Prostate gland (tissue), 2 donors: ENCODE measurements at regions of chr2 and their contacts with region 1.

Region 1: DNA sequence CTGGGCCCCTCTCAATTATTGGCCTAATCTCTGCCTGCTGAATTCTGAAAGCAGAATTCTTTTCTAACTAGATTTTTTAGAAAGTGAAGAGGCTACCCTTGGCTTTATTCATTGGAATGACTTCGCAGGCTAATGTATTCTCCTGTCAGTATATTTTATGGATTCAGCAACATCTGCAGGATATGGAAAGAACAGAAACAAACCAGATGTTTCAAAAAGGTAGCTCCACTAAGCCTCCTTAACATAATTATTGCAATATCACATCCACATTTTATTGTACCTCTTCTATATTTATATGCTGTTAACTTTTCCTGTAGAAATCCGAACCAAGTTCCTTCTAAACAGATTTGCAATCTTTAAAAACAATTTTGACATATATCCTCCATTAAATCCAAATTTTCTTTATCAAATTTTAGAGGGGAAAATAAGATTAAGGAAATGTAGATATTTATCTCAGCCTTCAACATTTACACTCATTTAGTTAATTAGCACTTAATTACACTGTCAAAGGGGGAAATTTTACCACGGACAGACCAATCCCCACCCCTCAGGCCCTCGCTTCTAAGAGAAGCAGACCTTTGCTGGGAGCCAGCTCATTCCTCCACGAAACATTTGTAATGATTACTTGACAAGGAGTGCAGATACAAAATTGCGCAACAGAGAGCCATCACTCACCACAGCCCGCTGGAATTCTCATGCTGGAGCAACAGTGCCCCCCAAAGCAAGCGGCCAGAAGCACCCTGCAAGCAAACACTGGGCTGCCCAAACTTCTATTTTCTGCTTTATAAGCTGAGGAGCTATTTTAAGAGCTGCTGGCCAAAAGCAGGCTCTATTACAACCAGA is 253.4 kb downstream of the ETAA1 start:
- DNase-seq: peak; percentile 54
- H3K4me3 ChIP-seq: no peak overlapping the region
- H3K27ac ChIP-seq: no peak overlapping the region
- H3K4me1 ChIP-seq: no peaks in the 10 kb centered on the region
- H3K27me3 ChIP-seq: no peaks in the 10 kb centered on the region
- CTCF ChIP-seq: peak in 3 of 4 experiments; percentile 39 to 69 (median 58)
- POLR2A ChIP-seq: no peak

Region 2: GRCh38 chr2:66445925-66446860 is 1204.3 kb before region 1 on chr2:
- intact Hi-C with region 1: loop called (anchors 5 kb)
- DNase-seq: no peak
- H3K4me3 ChIP-seq: peak overlapping the region; percentile 31
- H3K27ac ChIP-seq: peak overlapping the region; percentile 85 to 87
- H3K4me1 ChIP-seq: no peaks in the 10 kb centered on the region
- H3K27me3 ChIP-seq: peaks cover 4% of the 10 kb centered on the region
- CTCF ChIP-seq: no peak
- POLR2A ChIP-seq: no peak

Region 3: GRCh38 chr2:66587216-66587615 is 1063.3 kb before region 1 on chr2:
- intact Hi-C with region 1: loop called (anchors 10 kb)
- DNase-seq: no peak
- H3K4me3 ChIP-seq: no peak overlapping the region
- H3K27ac ChIP-seq: no peak overlapping the region
- H3K4me1 ChIP-seq: no peaks in the 10 kb centered on the region
- H3K27me3 ChIP-seq: peaks cover 5% of the 10 kb centered on the region
- CTCF ChIP-seq: peak in 1 of 4 experiments; percentile 6
- POLR2A ChIP-seq: no peak

Region 4: DNA sequence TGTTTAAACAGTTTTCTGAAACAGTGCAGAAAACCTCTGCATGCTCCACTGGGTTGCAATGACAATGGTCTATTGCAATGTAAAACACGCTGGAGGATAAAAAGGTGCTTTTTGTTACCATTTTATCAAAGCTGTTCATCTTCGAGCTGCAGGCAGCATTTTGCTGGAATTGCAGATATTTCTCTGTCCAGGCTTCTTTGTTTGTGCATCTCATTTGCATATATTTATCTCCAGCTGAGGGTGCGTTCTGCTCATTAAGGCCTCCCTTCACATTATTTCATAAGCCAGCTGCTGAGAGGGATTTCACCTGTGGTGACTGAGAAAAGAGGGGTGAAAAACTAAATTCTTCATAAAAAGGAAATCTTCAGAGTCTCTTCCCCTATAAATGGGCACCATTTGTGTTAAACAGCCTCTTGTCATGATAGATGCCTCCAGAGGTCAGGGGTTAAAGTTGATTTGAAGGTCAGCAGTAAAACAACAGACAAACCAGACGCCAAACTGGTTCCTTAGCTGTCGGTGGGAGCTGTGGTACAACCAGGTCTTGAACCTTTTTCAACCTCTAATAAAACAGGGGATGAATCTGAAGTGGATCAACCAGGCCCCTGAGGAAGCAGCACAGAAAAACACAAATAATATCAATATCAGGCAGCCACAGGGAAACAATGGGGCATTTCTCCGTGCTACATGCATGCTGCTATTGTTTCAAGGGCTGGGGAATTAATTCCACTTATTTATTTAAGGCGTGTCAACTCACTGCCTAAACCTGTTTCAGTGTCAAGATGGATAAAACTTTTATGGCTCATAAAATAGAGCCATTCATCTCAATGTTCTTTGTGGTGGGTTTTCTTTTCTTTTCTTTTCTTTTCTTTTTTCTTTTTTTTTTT is 950.5 kb before region 1 on chr2:
- intact Hi-C with region 1: loop called (anchors 10 kb)
- DNase-seq: no peak
- H3K4me3 ChIP-seq: no peak overlapping the region
- H3K27ac ChIP-seq: peak overlapping the region; percentile 45
- H3K4me1 ChIP-seq: peaks cover 9% of the 10 kb centered on the region
- H3K27me3 ChIP-seq: no peaks in the 10 kb centered on the region
- CTCF ChIP-seq: no peak
- POLR2A ChIP-seq: no peak

Region 5: GRCh38 chr2:66888791-66889631 is 761.5 kb before region 1 on chr2:
- intact Hi-C with region 1: loop called (anchors 10 kb)
- DNase-seq: peak; percentile 12
- H3K4me3 ChIP-seq: no peak overlapping the region
- H3K27ac ChIP-seq: peak overlapping the region; percentile 41 to 50
- H3K4me1 ChIP-seq: no peaks in the 10 kb centered on the region
- H3K27me3 ChIP-seq: no peaks in the 10 kb centered on the region
- CTCF ChIP-seq: no peak
- POLR2A ChIP-seq: no peak

Region 6: DNA sequence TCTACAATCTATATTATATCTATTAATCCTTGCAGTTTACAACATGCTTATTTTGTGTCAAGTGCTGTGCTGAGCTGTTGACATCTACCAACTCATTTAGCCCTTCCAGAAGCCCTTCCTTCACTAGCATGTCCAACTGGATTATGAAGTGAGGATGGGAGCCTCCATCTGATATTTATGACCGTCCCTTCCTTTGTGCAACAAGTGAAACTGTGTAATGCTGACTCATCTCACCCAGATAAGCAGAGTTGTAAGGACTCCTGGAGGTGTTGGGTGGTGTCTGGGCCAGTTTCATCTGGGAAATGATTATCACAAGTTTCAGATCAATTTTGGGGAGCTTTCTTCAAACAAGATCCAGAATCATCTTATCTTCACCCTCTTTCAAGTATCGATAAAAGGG is 410.0 kb before region 1 on chr2:
- intact Hi-C with region 1: loop called (anchors 10 kb)
- DNase-seq: no peak
- H3K4me3 ChIP-seq: no peak overlapping the region
- H3K27ac ChIP-seq: no peak overlapping the region
- H3K4me1 ChIP-seq: no peaks in the 10 kb centered on the region
- H3K27me3 ChIP-seq: no peaks in the 10 kb centered on the region
- CTCF ChIP-seq: no peak
- POLR2A ChIP-seq: no peak

Region 7: DNA sequence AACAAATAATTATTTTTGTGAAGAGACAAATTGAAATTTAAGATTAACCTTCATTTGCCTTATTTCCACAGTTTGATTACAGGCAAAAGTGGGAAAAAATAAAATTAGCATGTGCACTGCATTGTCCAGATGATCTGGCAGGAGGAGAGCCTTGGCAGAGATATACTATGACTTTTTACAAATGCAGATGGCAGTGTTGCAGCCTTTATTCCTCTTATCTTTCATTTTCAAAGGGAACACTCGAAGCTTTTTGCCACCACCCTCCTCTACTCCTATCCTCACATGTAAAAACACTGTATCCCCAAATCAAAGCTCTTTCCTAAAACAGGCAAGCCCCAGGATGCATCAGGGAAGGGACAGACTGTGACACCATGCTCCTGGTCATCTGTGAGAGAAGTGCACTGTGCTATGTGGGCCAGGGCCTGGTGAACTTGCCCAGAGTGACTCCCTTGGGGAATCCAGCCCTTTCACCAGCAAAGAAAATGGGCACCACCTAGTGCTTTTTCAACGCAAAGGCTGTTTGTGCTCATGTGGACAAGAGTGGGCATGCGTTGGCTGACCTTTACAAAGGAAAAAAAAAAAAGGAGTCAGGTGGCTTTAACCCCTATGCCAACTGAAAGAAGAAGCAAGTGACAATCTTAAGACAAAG is 328.0 kb before region 1 on chr2:
- intact Hi-C with region 1: loop called (anchors 5 kb)
- DNase-seq: no peak
- H3K4me3 ChIP-seq: no peak overlapping the region
- H3K27ac ChIP-seq: no peak overlapping the region
- H3K4me1 ChIP-seq: no peaks in the 10 kb centered on the region
- H3K27me3 ChIP-seq: no peaks in the 10 kb centered on the region
- CTCF ChIP-seq: peak in 1 of 4 experiments; percentile 49
- POLR2A ChIP-seq: no peak

Region 8: GRCh38 chr2:67397143-67397986 is 253.1 kb before region 1 on chr2 and contains the start of gene ETAA1:
- intact Hi-C with region 1: no loop called
- DNase-seq: peak; percentile 90
- H3K4me3 ChIP-seq: peak within 1 kb of the TSS; percentile 96 to 98
- H3K27ac ChIP-seq: peak within 1 kb of the TSS; percentile 95 to 96
- H3K4me1 ChIP-seq: no peaks in the 10 kb centered on the region
- H3K27me3 ChIP-seq: no peaks in the 10 kb centered on the region
- CTCF ChIP-seq: peak in 1 of 4 experiments; percentile 5
- POLR2A ChIP-seq: peak; percentile 77
- total RNA-seq, gene ETAA1: 14.5 to 14.6 TPM

Region 9: DNA sequence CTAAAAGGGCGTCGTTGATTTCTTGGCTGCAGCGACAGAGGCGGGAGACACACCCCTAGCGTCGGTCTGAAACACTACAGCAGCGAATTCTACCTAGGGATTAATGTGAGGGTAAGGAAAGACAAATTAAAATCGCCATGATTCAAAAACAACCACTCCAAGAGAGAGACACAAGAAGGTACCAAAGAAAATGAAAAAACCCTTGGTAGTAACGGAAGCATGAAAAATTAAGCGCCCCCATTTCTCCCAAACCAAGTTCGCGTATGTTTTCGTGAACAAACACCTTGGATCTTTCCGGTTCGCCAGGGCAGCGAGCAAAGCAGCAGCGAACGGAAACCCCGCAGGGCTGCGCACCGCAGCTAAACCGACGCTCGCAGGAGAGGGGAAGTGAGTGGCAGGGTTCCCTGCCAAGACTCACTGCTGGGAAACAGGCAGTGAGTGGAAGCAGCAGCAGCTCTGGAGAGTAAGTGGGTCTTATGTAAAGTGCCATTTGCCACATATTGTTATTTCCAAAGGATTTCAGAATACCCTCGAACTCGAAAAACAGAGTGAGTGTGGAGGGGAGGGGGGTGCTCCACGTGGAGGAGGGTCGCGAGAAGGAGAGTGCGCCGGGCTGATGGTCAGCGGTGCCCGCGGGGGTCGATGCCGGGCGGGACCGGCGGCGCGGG is 600.8 kb after region 1 on chr2:
- intact Hi-C with region 1: no loop called
- DNase-seq: peak; percentile 89
- H3K4me3 ChIP-seq: peak overlapping the region; percentile 89 to 91
- H3K27ac ChIP-seq: peak overlapping the region; percentile 96 to 97
- H3K4me1 ChIP-seq: peaks cover 6% of the 10 kb centered on the region
- H3K27me3 ChIP-seq: no peaks in the 10 kb centered on the region
- CTCF ChIP-seq: peak; percentile 65 to 85 (median 74)
- POLR2A ChIP-seq: peak; percentile 51